ENCODE measurements at regions of chr6 and their contacts with region 1.

Region 1: GRCh38 chr6:131063028-131063763 is at the start of gene EPB41L2:
- DNase-seq: peak; percentile 91
- H3K4me3 ChIP-seq: peak within 1 kb of the TSS; percentile 83 to 96 (median 89)
- H3K27ac ChIP-seq: peak within 1 kb of the TSS; percentile 90
- H3K4me1 ChIP-seq: peaks cover 10% of the 10 kb centered on the region
- H3K27me3 ChIP-seq: no peaks in the 10 kb centered on the region
- CTCF ChIP-seq: peak in 1 of 2 donors; percentile 19
- POLR2A ChIP-seq: peak; percentile 60
- total RNA-seq, gene EPB41L2: 84.8 and 87.7 TPM in 2 replicates

Region 2: DNA sequence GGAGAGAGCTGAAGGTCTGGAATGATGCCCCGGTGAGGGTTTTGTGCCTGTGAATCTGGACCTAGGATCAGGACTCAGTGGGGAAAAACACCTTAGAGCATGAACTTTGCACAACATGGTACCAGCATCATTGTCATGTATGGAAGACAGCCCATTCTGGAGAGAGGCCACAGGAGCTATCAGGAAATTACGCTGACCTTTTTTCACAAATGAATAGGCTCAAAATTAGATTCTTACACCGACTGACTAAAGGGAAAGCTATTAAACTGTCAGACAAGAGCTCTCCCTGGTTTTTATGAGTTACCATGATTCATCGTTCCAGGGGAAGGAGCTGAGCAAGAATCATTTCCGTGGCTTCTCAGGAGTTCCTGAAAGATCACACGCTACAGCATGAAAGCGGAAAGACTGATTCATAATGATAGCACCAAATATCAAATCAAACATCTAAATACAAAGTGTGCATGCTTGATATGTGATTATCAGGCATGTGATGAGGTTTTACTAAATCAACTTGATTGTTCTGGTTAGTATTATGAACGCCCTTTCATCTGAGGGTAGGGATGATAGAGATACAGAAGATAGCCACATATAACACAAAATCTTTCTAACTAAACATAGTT is 460.9 kb before region 1 on chr6:
- CTCF ChIA-PET with region 1: no interaction called
- POLR2A ChIA-PET with region 1: no interaction called
- dilution Hi-C with region 1: no loop called
- intact Hi-C with region 1: loop called (anchors 2 kb)
- DNase-seq: peak; percentile 98
- H3K4me3 ChIP-seq: no peak overlapping the region
- H3K27ac ChIP-seq: peak overlapping the region; percentile 99
- H3K4me1 ChIP-seq: peaks cover 29% of the 10 kb centered on the region
- H3K27me3 ChIP-seq: no peaks in the 10 kb centered on the region
- CTCF ChIP-seq: no peak
- POLR2A ChIP-seq: peak; percentile 50

Region 3: DNA sequence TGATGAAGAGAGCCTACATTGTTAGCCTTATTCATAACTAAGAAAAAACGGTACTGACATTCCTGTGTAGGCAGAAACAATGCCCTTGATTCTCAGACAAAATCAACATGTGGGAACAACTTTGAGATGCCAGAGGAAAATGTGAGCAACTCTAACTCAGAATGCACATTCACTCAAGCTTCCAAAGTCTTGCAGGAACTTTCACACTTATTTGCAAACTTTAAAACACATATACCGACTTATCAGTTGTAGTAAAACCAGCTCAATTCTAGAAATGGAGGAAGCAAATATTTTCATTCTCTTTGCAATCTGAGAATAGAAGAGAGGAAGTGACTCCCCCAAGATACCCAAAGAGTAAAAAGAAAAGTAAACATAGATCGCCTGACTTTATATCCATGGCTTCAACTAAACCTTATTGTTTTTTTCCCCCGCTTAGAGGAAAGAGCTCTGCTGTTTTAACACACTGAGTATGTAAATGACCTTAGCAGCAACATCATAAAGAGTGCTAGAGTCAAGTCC is 117.7 kb before region 1 on chr6:
- CTCF ChIA-PET with region 1: no interaction called
- POLR2A ChIA-PET with region 1: no interaction called
- dilution Hi-C with region 1: no loop called
- intact Hi-C with region 1: loop called (anchors 1 kb)
- DNase-seq: peak; percentile 89
- H3K4me3 ChIP-seq: peak overlapping the region in 1 of 3 experiments; percentile 20
- H3K27ac ChIP-seq: peak overlapping the region; percentile 69
- H3K4me1 ChIP-seq: peaks cover 30% of the 10 kb centered on the region
- H3K27me3 ChIP-seq: no peaks in the 10 kb centered on the region
- CTCF ChIP-seq: no peak
- POLR2A ChIP-seq: no peak

Region 4: DNA sequence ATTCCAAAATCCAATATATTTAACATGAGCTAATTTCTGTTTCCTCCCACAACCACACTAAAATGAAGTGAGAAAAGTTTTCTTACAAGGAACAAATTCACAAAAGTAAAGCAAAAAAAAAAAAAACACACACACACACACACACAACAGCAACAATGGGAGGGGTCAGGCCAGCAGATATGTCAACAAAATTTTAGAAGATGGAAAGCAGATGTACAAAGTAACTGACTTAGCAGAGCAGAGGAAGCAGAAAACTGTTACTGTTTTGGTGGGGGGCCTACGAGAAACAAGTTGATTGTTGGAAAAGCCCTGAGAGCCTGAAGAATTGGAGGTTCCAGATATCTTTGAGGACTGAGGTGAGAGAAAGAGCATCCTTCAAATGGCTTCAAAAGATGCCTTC is 11.9 kb before region 1 on chr6:
- CTCF ChIA-PET with region 1: interaction called, 6 read pairs
- POLR2A ChIA-PET with region 1: no interaction called
- dilution Hi-C with region 1: no loop called
- intact Hi-C with region 1: loop called (anchors 1 kb)
- DNase-seq: no peak
- H3K4me3 ChIP-seq: no peak overlapping the region
- H3K27ac ChIP-seq: no peak overlapping the region
- H3K4me1 ChIP-seq: peaks cover 10% of the 10 kb centered on the region
- H3K27me3 ChIP-seq: no peaks in the 10 kb centered on the region
- CTCF ChIP-seq: no peak
- POLR2A ChIP-seq: no peak

Region 5: GRCh38 chr6:131532580-131533039 is 469.4 kb after region 1 on chr6:
- CTCF ChIA-PET with region 1: no interaction called
- POLR2A ChIA-PET with region 1: no interaction called
- dilution Hi-C with region 1: no loop called
- intact Hi-C with region 1: loop called (anchors 2 kb)
- DNase-seq: no peak
- H3K4me3 ChIP-seq: no peak overlapping the region
- H3K27ac ChIP-seq: no peak overlapping the region
- H3K4me1 ChIP-seq: no peaks in the 10 kb centered on the region
- H3K27me3 ChIP-seq: peaks cover 0 to 6% of the 10 kb centered on the region in 2 experiments
- CTCF ChIP-seq: no peak
- POLR2A ChIP-seq: no peak